Motor neuron (in vitro differentiated cells): ENCODE measurements at regions of chr11 and their contacts with region 1.

Region 1: DNA sequence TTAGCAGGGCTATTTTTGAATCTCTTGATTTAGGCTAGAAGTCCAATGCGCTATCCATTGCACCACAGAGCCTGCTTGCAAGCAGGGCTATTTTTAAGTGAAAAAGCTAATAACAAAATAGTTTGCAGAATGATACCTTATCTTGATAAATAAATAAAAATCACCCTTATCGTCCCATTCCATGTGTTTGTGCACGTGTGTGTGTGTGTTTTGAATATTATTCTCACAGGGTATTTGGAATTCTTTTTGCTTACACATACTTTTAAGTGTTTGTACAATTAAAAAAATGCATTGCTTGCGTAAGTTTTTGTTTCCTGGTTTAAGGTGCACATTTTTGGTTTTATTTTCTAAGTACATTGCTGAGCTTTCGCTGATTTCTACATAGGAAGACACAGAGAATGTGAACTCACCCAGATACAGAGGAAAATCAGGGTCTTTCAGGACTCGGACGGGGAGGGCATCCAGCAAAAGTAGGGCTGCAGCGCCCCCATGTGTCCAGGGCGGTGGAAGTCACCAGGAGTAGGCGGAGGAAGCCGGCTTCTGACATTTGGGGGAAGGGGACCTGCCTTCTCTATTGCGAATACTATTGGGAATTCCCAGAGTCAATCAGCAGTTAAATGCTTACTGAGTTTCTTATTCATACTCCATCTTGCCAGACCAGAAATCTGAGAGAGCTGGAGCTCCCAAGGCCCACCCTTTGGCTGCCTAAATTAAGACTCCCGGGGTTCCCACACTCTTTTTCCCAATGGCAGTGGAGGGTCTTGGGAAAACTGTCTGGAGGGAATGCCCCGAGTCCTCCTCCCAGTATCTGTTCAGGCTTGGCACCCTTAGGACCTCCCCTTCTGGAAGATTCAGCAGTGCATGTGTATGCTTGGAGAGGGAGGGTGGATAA is 27.2 kb downstream of the SLC1A2 start:
- ATAC-seq: peak; percentile 78 to 95 (median 88)
- H3K4me3 ChIP-seq: no peak overlapping the region
- H3K27ac ChIP-seq: no peak overlapping the region
- H3K4me1 ChIP-seq: peaks cover 9 to 23% of the 10 kb centered on the region in 2 donors

Region 2: GRCh38 chr11:34585735-34586487 is 806.3 kb before region 1 on chr11:
- in situ Hi-C with region 1: loop called in 3 of 9 experiments (anchors 25 kb)
- ATAC-seq: peak; percentile 65 to 92 (median 74)
- H3K4me3 ChIP-seq: peak overlapping the region in 2 of 5 donors; percentile 8 to 12
- H3K27ac ChIP-seq: no peak overlapping the region
- H3K4me1 ChIP-seq: no peaks in the 10 kb centered on the region

Region 3: GRCh38 chr11:35237860-35238715 is 154.1 kb before region 1 on chr11:
- in situ Hi-C with region 1: loop called in 1 of 9 experiments (anchors 25 kb)
- ATAC-seq: peak in 1 of 8 experiments; percentile 34
- H3K4me3 ChIP-seq: no peak overlapping the region
- H3K27ac ChIP-seq: no peak overlapping the region
- H3K4me1 ChIP-seq: no peaks in the 10 kb centered on the region

Region 4: DNA sequence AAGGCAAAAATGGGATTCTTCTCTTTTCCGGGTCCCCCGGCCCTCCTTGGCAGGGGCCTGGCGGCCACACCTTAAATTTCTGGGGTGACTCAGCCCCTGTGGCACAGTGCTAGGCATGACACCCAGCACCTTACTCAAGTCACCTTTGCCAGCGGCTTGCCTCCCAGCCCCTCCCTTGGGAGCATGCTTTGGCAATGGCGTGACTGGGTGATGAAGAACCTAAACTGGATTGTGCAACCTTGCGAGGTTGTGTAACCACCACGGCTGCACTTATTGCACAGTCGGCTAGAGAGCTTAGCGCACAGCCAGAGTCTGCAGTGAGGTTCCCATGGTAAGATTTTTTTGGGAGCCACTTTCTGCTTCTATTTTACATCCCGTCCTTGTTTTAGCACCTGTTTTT is 535.6 kb after region 1 on chr11:
- in situ Hi-C with region 1: no loop called
- ATAC-seq: no peak
- H3K4me3 ChIP-seq: no peak overlapping the region
- H3K27ac ChIP-seq: no peak overlapping the region
- H3K4me1 ChIP-seq: peaks cover 10% of the 10 kb centered on the region in 2 donors

Region 5: DNA sequence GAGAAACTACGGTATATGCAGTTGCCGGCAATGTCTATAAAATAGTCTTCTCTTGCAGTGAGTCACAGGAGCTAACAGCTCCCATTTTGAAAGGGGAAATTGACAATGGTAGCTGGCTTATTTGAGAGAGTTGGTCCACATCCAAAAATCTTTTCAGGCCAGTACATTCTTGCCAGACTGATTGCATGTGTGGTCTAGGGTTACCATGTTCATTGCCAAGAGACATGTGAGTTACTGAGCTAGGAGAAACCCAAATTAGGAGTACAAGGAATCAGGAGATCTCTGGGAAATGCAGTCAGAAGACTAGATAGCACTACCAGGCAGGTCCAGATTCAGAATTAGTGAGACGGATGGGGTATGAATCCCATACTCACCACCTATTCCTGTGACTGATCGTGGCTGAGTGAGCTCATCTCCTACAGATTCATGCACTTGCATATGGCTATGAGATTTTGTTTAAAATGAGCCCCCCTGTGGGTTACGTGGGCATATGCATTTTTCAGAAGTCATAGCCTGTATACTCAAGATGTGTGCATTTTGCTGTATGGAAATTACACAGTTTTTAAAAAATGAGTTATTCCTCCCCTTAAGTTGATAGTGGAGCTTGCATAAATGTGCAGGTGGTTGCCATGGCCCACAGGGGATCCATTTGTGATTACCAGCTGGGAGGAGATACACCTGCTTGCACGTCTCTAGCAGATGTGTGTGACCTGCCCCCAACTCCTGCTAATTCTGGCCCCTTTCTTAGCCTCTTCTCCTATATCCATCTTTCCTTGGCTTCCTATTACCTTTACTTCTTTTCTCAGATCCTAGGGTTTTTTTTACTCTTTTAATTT is 794.4 kb after region 1 on chr11:
- in situ Hi-C with region 1: no loop called
- ATAC-seq: peak in 6 of 8 experiments; percentile 18 to 91 (median 75)
- H3K4me3 ChIP-seq: no peak overlapping the region
- H3K27ac ChIP-seq: no peak overlapping the region
- H3K4me1 ChIP-seq: peaks cover 7 to 17% of the 10 kb centered on the region in 2 donors